ENCODE measurements at regions of chr11 and their contacts with region 1.

Region 1: GRCh38 chr11:72080256-72080974 is at the starts of genes LRRC51 and NUMA1:
- DNase-seq: peak; percentile 100
- H3K4me3 ChIP-seq: peak within 1 kb of the TSS; percentile 66 to 81 (median 72)
- H3K27ac ChIP-seq: peak within 1 kb of the TSS; percentile 91 to 94 (median 92)
- H3K4me1 ChIP-seq: peaks cover 0 to 26% (median 23%) of the 10 kb centered on the region in 4 donors
- H3K27me3 ChIP-seq: no peaks in the 10 kb centered on the region
- CTCF ChIP-seq: no peak
- EP300 ChIP-seq: no peak
- POLR2A ChIP-seq: peak; percentile 49 to 52
- total RNA-seq, gene LRRC51: 3.2 to 14.8 (median 6.4) TPM
- total RNA-seq, gene NUMA1: 249 to 343 (median 265) TPM

Region 2: DNA sequence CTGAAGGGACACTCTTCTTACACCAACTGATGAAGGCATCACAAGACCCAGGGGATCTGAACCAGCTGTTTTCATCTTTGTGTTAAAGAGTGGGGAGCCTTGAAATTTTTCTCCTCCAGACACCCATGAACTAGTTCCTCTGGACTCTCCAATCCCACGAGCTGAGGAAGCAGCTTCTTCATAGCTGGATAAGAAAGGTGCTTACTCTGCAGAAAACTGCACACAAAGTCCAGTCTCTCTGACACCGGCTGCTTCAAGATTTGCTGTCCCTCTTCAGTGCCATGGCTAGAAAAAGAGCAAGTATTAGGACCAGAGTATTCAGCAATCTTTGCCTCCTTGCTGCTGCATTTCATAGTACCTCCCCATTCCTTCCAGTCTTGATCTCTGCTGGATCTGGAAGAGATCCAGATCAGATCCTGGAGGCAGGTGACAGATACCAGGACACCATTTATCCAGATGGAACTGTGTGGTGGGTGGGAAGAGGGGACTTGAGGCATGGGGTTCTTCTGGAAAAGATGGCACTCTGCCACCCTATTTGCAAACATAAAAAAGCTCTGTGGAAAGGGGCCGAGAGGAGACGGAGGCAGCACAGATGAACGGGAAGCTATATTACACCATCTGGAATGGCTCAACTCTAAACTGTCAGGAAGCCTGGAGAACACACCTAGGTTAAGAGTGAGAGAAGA is 56.2 kb before region 1 on chr11:
- intact Hi-C with region 1: loop called (anchors 2 kb)
- DNase-seq: peak; percentile 54
- H3K4me3 ChIP-seq: no peak overlapping the region
- H3K27ac ChIP-seq: peak overlapping the region; percentile 71 to 83 (median 73)
- H3K4me1 ChIP-seq: peaks cover 0 to 56% (median 46%) of the 10 kb centered on the region in 4 donors
- H3K27me3 ChIP-seq: no peaks in the 10 kb centered on the region
- CTCF ChIP-seq: no peak
- EP300 ChIP-seq: no peak
- POLR2A ChIP-seq: no peak

Region 3: DNA sequence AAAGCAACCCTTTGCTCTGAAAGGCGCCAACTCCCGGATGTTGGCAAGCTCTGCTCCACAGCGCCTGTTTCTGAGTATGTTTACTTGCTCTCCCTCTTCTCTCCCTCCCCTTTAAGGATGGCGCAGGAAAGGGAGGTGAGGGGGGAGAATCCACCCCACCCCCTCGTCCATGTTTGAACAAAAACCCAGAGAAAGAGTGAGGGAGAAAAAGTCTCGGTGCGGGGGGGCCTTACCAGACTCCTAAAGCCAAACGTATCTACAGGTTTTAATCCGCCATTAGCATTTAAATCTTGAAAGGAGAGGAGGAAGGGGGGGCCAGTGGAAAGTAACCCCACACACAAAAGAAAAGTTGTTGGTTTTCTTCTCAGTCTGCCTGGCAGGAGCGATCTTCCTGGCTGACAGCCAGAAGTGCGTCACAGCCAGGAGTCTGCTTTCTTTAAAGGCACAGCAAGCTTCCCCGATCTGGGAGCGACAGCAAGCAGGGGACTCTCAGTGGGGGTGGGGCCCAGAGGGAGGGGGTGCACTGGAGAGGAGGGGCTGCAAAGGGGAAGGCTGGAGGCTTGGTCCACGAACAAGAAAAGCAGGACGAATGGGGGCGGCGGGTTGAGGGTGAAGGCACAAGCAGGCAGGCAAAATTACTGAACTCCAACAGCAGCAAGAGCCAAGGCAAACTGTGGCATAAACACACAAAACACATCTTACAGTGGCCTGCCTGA is 39.5 kb before region 1 on chr11:
- intact Hi-C with region 1: loop called (anchors 1 kb)
- DNase-seq: peak; percentile 99
- H3K4me3 ChIP-seq: peak overlapping the region; percentile 50 to 68 (median 62)
- H3K27ac ChIP-seq: peak overlapping the region; percentile 96 to 98 (median 97)
- H3K4me1 ChIP-seq: peaks cover 0 to 76% (median 67%) of the 10 kb centered on the region in 4 donors
- H3K27me3 ChIP-seq: no peaks in the 10 kb centered on the region
- CTCF ChIP-seq: no peak
- EP300 ChIP-seq: peak in 2 of 4 donors; percentile 28 to 47
- POLR2A ChIP-seq: peak in 1 of 2 donors; percentile 57